MCF 10A (cell line): ENCODE measurements at regions of chr12 and their contacts with region 1.

Region 1: DNA sequence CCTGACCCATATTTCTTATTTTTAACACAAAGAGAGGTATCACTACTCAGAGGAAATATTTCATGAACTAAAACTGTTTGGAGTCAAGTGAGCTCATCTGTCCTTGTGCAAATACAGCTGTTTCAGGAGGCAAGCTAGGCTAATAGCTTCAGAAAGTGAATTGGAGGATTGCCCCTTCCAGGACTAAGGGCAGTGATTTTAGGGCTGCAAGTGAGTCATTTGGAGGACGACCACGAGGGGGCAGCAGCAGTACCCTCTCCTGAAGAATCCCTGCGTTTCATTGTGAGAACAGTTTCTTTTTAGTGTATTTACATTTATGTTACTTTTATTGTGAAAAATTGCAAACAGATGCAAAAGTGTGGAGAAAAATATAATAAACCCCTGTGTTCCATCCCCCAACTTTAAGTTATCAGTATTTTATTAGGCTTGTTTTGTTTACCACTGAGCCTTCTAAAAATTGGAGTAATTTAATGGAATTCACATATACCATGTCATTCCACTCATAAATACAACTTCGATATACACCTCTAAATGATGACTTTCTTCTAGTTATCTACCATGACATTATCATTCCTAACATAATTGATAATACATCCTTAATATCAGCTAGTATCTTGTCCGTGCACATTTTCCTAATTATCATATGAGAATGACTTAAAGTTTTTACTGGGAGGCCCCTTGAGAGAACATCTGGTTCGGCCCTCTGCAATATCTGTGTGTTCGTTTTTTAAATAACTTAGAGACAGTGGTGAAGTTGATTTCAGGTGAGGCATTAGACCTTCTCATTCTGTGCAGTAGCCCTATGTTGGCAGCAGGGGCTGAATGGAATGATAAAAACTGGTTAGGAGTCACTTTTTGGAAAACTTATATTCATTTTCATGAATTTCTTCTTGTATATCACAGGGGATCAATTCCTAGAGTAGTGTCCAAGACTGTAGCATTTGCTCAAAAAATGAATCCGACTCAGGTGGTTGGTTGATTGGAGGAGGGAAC is 13.7 kb downstream of the FOXJ2 start:
- DNase-seq: peak; percentile 78
- H3K4me3 Mint-ChIP-seq: no peak overlapping the region
- H3K27ac Mint-ChIP-seq: no peak overlapping the region
- H3K4me1 Mint-ChIP-seq: no peaks in the 10 kb centered on the region
- H3K27me3 Mint-ChIP-seq: no peaks in the 10 kb centered on the region
- CTCF ChIP-seq: peak; percentile 75

Region 2: DNA sequence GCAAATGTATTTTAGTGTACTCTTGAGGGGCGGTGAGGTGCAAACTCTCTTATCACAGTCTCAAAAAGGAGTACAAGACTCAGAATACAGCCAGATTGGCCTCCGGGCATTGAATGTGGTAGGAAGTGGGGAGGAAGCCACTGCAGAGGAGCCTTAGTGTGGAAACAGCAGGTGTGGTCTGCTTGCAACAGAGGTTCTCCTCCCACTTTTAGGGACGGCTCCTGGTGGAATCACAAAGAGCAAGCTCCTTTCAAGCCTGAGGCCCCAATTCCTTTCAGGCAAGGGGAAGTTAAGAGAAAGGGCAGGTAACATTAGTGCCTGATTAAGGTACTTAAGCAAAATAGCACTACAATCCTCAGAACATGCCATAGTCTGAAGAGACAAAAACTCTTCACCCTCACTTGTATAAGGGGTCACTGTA is 86.5 kb before region 1 on chr12:
- CTCF ChIA-PET with region 1: interaction called, 10 read pairs
- POLR2A ChIA-PET with region 1: no interaction called
- intact Hi-C with region 1: no loop called
- DNase-seq: peak; percentile 96
- H3K4me3 Mint-ChIP-seq: peak overlapping the region; percentile 60
- H3K27ac Mint-ChIP-seq: peak overlapping the region; percentile 92
- H3K4me1 Mint-ChIP-seq: peaks cover 27% of the 10 kb centered on the region
- H3K27me3 Mint-ChIP-seq: no peaks in the 10 kb centered on the region
- CTCF ChIP-seq: no peak

Region 3: DNA sequence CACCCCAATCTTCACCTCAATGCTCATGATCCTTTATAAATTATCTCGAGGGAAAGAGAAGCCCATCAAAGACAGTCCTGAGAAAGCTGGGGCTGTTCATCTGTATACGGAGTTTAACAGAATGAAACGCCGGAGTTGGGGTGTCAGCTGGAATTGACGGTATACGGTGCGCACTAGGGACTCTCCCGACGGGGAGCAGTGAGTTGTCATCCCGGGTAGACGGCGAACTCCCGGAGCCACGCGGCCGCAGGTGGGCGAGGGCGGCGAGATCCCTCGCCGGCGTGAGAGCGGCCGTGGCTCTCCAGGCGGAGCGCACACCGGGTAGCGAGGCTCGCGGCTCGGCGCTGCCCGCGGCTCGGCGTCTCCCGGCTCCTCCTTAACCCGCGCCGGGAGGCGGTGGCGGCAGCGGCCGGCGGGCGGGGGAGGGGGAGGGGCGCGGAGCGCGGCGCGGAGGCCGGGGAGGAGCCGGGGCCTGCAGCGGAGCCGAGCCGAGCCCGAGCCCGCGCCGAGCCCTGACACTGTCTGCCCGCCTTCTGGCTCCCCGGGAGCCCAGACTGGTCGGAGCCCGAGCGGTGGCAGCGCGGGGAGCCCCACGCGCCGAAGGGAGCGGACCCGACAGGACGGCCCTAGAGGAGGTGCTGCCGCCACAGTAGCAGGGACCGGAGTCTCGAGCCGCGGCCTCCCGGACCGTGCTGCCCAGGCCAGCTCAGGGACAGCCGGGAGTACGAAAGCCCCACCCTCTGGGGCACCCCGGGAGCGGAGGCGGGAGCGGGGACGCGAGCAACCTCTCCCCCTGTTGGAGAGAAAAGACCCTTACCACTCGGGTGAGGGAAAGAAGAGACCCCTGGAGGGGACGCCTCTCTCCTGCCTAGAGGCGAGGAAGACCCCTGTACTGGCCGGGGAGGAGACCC is 13.8 kb before region 1 on chr12 and contains the start of gene FOXJ2:
- CTCF ChIA-PET with region 1: interaction called, 10 read pairs
- POLR2A ChIA-PET with region 1: interaction called, 4 read pairs
- intact Hi-C with region 1: no loop called
- DNase-seq: peak; percentile 72
- H3K4me3 Mint-ChIP-seq: peak within 1 kb of the TSS; percentile 78
- H3K27ac Mint-ChIP-seq: peak within 1 kb of the TSS; percentile 89
- H3K4me1 Mint-ChIP-seq: peaks cover 36% of the 10 kb centered on the region
- H3K27me3 Mint-ChIP-seq: no peaks in the 10 kb centered on the region
- CTCF ChIP-seq: no peak
- total RNA-seq, gene FOXJ2: 19.7 and 21.1 TPM in 2 replicates

Region 4: DNA sequence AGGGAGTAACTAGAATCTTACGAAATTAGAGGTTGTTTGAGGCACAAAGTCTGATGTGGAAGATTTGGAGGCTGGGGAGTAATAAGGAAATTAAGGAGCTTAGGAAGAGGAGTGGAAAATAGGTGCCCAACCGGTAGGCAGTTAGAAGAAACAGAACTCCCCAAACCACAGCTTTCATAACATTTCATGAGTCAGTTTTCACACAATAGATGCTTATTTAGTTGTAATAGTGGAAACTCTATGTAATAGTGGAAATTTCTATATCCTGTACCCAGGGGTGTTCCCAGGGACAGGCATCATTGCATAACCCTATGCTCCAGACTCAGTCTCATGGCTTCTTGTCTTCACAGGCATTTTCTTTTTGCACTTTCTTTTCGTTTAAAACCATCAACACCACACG is 11.6 kb after region 1 on chr12:
- CTCF ChIA-PET with region 1: interaction called, 23 read pairs
- POLR2A ChIA-PET with region 1: no interaction called
- intact Hi-C with region 1: no loop called
- DNase-seq: peak; percentile 80
- H3K4me3 Mint-ChIP-seq: no peak overlapping the region
- H3K27ac Mint-ChIP-seq: no peak overlapping the region
- H3K4me1 Mint-ChIP-seq: peaks cover 14% of the 10 kb centered on the region
- H3K27me3 Mint-ChIP-seq: no peaks in the 10 kb centered on the region
- CTCF ChIP-seq: no peak

Region 5: GRCh38 chr12:8069582-8069981 is 23.3 kb after region 1 on chr12:
- CTCF ChIA-PET with region 1: interaction called, 22 read pairs
- POLR2A ChIA-PET with region 1: no interaction called
- intact Hi-C with region 1: no loop called
- DNase-seq: no peak
- H3K4me3 Mint-ChIP-seq: no peak overlapping the region
- H3K27ac Mint-ChIP-seq: no peak overlapping the region
- H3K4me1 Mint-ChIP-seq: peaks cover 8% of the 10 kb centered on the region
- H3K27me3 Mint-ChIP-seq: no peaks in the 10 kb centered on the region
- CTCF ChIP-seq: no peak

Region 6: GRCh38 chr12:8078398-8078797 is 32.1 kb after region 1 on chr12:
- CTCF ChIA-PET with region 1: interaction called, 42 read pairs
- POLR2A ChIA-PET with region 1: interaction called, 10 read pairs
- intact Hi-C with region 1: loop called (anchors 1 kb)
- DNase-seq: peak; percentile 57
- H3K4me3 Mint-ChIP-seq: no peak overlapping the region
- H3K27ac Mint-ChIP-seq: no peak overlapping the region
- H3K4me1 Mint-ChIP-seq: peaks cover 24% of the 10 kb centered on the region
- H3K27me3 Mint-ChIP-seq: no peaks in the 10 kb centered on the region
- CTCF ChIP-seq: peak; percentile 45

Region 7: GRCh38 chr12:8154526-8154925 is 108.3 kb after region 1 on chr12:
- CTCF ChIA-PET with region 1: no interaction called
- POLR2A ChIA-PET with region 1: no interaction called
- intact Hi-C with region 1: no loop called
- DNase-seq: no peak
- H3K4me3 Mint-ChIP-seq: no peak overlapping the region
- H3K27ac Mint-ChIP-seq: no peak overlapping the region
- H3K4me1 Mint-ChIP-seq: peaks cover 14% of the 10 kb centered on the region
- H3K27me3 Mint-ChIP-seq: peaks cover 35% of the 10 kb centered on the region
- CTCF ChIP-seq: no peak